ENCODE measurements at regions of chr14 and their contacts with region 1.

Region 1: GRCh38 chr14:89382901-89383845 is 33.9 kb downstream of the FOXN3 start:
- DNase-seq: no peak
- H3K4me3 ChIP-seq: no peak overlapping the region
- H3K27ac ChIP-seq: no peak overlapping the region
- H3K4me1 ChIP-seq: no peaks in the 10 kb centered on the region
- H3K27me3 ChIP-seq: peaks cover 37% of the 10 kb centered on the region
- CTCF ChIP-seq: no peak

Region 2: GRCh38 chr14:87805315-87805723 is 1577.9 kb before region 1 on chr14:
- CTCF ChIA-PET with region 1: no interaction called
- POLR2A ChIA-PET with region 1: no interaction called
- intact Hi-C with region 1: no loop called
- DNase-seq: peak in 1 of 2 experiments; percentile 0
- H3K4me3 ChIP-seq: no peak overlapping the region
- H3K27ac ChIP-seq: no peak overlapping the region
- H3K4me1 ChIP-seq: no peaks in the 10 kb centered on the region
- H3K27me3 ChIP-seq: no peaks in the 10 kb centered on the region
- CTCF ChIP-seq: peak; percentile 71

Region 3: DNA sequence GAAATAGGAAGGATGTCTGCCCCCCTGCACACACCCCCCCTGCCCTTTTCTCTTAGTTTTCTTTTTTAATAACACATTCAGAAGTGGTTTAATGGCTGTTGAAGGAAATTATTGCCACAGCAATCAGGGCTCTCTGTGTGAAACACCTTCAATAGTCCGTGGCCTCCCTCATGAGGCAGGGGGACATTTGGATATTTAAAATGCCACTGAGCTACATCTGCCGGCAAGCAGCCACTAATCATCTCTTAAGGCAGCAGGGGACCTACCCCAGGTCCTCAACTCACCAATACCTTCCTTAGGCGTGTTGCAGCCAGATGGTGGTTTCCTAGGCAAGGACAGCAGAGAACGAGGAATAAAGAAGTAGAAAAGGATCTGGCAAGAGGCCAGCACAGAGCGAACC is 275.5 kb before region 1 on chr14:
- CTCF ChIA-PET with region 1: no interaction called
- POLR2A ChIA-PET with region 1: no interaction called
- intact Hi-C with region 1: no loop called
- DNase-seq: no peak
- H3K4me3 ChIP-seq: no peak overlapping the region
- H3K27ac ChIP-seq: no peak overlapping the region
- H3K4me1 ChIP-seq: no peaks in the 10 kb centered on the region
- H3K27me3 ChIP-seq: peaks cover 23% of the 10 kb centered on the region
- CTCF ChIP-seq: no peak

Region 4: GRCh38 chr14:89146274-89146673 is 236.9 kb before region 1 on chr14:
- CTCF ChIA-PET with region 1: interaction called, 16 read pairs
- POLR2A ChIA-PET with region 1: no interaction called
- intact Hi-C with region 1: no loop called
- DNase-seq: no peak
- H3K4me3 ChIP-seq: no peak overlapping the region
- H3K27ac ChIP-seq: no peak overlapping the region
- H3K4me1 ChIP-seq: no peaks in the 10 kb centered on the region
- H3K27me3 ChIP-seq: 0 out of 2 replicates have a peak, but pooled peaks cover 5% of the 10 kb centered on the region
- CTCF ChIP-seq: no peak

Region 5: DNA sequence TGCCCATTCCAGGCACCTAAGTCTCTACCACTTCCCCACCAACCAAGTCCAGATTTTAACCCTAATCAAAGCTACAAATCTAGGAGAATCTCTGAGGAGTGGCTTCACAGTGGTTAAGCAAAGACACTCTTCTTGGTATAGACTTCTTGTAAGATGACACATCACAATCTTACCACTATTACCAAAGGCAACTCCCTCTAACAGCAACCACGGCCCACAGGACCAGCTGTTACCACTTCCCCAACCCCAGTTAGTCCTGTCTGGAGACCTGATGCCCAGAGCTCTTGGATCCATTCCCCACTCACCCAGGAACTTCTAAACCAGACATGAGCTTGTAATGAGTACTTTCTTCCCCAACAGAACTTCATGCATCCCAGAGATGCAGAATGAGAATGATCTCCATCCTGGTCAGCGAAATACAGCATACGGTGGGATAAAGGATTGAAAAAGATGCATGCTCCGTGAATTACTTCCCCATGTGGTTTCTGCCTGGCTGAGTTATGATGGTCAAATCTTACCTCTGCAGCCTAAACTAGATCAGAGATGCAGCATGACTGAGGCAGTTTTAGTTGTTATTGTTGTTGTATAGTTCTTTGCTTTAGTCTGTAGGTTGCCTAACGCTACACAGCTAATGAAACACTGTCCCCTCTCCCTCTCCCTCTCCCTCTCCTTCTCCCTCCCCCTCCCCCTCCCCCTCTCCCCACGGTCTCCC is 121.6 kb after region 1 on chr14:
- CTCF ChIA-PET with region 1: no interaction called
- POLR2A ChIA-PET with region 1: no interaction called
- intact Hi-C with region 1: no loop called
- DNase-seq: no peak
- H3K4me3 ChIP-seq: no peak overlapping the region
- H3K27ac ChIP-seq: no peak overlapping the region
- H3K4me1 ChIP-seq: no peaks in the 10 kb centered on the region
- H3K27me3 ChIP-seq: peaks cover 20% of the 10 kb centered on the region
- CTCF ChIP-seq: no peak

Measured in PC-9 (cell line).